ENCODE measurements at regions of chr17 and their contacts with region 1.

Region 1: DNA sequence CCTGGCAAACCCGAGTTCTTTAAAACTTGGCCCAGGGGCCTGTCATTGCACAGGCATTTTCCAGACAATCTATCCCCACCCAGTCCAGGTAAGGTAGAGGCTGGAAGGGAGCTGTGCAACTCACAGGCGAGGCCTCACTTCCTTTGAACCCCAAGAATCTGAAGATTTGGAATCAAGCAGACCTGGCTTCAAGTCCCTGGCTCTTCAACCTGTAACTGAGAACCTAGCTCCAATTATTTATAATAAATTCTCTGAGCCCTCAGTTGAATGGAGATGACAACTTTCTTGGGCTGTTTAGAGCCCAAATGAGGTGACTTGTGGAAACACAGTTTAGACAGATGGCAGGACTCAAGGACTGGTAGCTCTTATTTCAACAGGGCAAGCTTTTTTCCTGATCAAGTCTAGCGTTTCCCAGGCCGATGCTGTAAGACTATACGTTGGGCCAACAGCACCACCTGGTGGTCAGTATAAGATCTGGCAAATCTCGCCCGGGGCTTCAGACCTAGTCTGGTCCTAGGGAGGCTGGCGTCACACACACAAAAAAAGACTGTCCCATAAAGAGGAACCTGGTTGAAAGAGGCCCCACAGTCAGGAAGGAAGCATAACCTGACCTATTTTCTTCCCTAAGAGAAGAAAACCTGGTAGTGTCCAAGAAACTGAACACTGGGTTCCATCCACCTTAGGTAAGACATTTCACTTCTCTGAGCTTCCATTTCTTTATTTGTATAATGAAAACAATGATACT is 117.9 kb downstream of the C17orf67 start:
- DNase-seq: peak; percentile 79
- H3K4me3 Mint-ChIP-seq: no peak overlapping the region
- H3K27ac Mint-ChIP-seq: no peak overlapping the region
- H3K4me1 Mint-ChIP-seq: peaks cover 20% of the 10 kb centered on the region
- H3K27me3 Mint-ChIP-seq: peaks cover 14% of the 10 kb centered on the region

Region 2: DNA sequence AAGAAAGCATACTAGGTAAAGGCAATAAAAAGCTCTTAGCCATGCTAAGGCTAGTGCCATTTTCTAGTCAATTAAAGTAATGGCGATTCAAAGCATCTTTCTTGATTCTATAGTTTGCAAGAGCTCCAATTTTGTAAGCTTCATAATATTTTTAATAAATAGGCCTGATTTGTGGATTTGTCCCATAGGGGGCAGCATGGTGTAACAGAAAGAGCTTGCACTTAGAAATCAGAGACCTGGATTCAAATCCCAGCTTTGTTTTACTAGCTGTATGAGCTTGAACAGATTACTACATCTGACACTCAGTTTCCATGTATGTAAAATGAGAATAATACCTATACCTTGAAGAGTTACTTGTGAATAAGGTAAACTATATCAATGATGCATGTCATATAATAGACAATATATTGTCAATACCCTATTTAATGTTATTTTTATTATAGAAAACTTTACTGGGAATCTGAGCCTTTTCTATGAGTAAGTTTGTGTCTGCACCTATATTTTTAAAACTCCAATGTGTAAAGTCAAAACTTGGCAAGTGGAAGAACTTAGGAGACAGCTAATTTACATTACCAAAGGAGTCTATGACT is 215.9 kb before region 1 on chr17:
- CTCF ChIA-PET with region 1: interaction called, 21 read pairs
- POLR2A ChIA-PET with region 1: no interaction called
- DNase-seq: peak; percentile 19
- H3K4me3 Mint-ChIP-seq: no peak overlapping the region
- H3K27ac Mint-ChIP-seq: no peak overlapping the region
- H3K4me1 Mint-ChIP-seq: no peaks in the 10 kb centered on the region
- H3K27me3 Mint-ChIP-seq: peaks cover 17% of the 10 kb centered on the region

Region 3: DNA sequence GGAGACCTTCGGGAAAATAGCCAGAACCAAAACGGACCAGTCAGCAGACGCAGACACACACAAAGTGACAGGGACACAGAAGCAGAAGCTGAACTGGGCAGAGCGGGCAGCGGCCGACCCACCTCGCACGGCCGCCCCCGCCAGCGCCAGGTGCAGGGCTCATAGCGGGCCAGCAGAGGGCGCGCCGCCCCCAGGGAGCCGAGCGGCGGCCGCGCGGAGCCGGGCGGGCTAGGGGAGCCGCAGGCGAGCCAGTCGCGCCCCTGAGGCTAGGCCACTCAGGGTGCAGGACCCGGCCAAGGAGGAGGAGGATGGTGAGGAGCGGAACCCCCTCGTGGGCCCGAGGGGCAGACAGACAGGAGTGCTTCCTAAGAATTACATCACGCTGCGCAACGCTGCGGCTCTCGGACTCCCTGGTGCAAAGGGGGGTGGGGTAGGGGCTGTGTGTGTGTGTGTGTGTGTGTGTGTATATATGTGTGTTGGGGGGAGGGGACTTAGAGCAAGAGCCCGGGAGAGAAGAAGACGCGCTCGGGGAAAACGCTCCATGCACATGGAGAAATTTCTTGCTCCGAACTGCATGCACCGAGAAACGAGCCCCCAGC is 123.2 kb before region 1 on chr17:
- CTCF ChIA-PET with region 1: interaction called, 83 read pairs
- POLR2A ChIA-PET with region 1: interaction called, 3 read pairs
- DNase-seq: peak; percentile 59
- H3K4me3 Mint-ChIP-seq: peak overlapping the region; percentile 46
- H3K27ac Mint-ChIP-seq: no peak overlapping the region
- H3K4me1 Mint-ChIP-seq: peaks cover 30% of the 10 kb centered on the region
- H3K27me3 Mint-ChIP-seq: peaks cover 64% of the 10 kb centered on the region

Region 4: DNA sequence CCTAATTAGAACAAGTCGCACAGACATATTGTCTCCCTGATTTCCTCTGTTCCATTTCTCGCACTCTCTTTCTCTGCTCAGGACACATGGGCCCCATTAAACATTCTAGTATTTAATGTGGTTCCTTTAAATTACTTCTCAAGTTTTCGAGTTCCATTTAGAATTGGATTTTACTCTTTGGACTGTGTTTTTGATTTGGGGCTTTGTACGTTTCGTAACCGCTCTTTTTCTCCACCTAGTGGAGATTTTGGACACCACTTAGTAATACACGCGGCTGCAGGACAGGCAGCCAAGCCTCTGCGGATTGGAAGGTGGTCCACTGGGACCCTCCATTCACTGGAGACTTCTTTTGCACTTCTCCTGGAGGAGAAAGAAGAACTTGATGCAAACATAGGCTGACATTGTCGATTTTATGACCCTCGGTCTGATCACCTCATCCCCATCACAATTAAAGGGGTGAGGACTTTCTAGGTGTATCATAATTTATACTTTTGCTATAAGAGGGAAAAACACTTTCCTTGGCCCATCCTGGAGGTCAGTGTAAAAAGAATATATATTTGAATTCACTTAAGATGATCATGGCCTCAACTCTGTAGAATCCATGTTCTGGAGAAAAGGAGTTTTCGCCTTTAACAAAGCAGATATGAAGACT is 36.5 kb before region 1 on chr17:
- CTCF ChIA-PET with region 1: interaction called, 20 read pairs
- POLR2A ChIA-PET with region 1: interaction called, 3 read pairs
- DNase-seq: no peak
- H3K4me3 Mint-ChIP-seq: no peak overlapping the region
- H3K27ac Mint-ChIP-seq: no peak overlapping the region
- H3K4me1 Mint-ChIP-seq: peaks cover 7% of the 10 kb centered on the region
- H3K27me3 Mint-ChIP-seq: peaks cover 26% of the 10 kb centered on the region

Region 5: DNA sequence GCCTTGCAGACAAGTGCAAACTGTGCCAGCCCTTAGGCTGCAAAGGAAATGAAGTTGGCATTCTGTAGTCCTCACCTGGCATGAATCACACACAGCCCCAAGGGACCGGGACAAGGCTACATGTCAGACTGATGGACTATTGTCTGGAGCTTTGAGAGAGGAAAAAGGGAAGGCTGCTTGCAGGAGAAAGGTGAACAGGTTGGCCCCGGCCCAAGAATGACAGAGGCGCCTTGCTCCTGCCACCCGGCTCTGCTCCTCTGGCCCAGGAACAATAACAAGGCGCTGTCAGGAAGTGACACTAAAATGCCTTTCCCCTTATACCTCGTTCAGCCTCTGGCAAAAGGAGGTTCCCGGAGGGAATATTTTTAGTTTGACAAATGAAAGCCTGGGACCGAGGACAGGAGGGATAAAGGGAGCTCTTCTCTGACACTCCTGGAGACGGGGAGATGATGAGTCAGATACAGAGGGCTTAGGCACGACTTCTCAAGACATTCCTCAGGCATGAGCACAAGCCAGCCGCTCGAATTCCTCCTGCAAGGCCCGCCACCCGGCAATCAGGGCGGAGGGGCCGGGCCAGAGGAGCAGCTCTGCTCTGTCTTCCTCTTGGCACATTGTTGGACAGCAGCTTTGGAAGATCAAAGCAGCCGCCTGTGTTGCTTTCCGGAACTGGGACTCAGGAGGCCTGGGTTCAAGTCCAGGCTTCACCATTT is 16.4 kb before region 1 on chr17:
- CTCF ChIA-PET with region 1: interaction called, 14 read pairs
- POLR2A ChIA-PET with region 1: no interaction called
- DNase-seq: no peak
- H3K4me3 Mint-ChIP-seq: no peak overlapping the region
- H3K27ac Mint-ChIP-seq: no peak overlapping the region
- H3K4me1 Mint-ChIP-seq: no peaks in the 10 kb centered on the region
- H3K27me3 Mint-ChIP-seq: peaks cover 20% of the 10 kb centered on the region

Region 6: GRCh38 chr17:56779898-56780733 is 64.3 kb after region 1 on chr17:
- CTCF ChIA-PET with region 1: interaction called, 30 read pairs
- POLR2A ChIA-PET with region 1: interaction called, 6 read pairs
- DNase-seq: peak; percentile 91
- H3K4me3 Mint-ChIP-seq: peak overlapping the region; percentile 81
- H3K27ac Mint-ChIP-seq: peak overlapping the region; percentile 90
- H3K4me1 Mint-ChIP-seq: peaks cover 37% of the 10 kb centered on the region
- H3K27me3 Mint-ChIP-seq: peaks cover 11% of the 10 kb centered on the region

Region 7: DNA sequence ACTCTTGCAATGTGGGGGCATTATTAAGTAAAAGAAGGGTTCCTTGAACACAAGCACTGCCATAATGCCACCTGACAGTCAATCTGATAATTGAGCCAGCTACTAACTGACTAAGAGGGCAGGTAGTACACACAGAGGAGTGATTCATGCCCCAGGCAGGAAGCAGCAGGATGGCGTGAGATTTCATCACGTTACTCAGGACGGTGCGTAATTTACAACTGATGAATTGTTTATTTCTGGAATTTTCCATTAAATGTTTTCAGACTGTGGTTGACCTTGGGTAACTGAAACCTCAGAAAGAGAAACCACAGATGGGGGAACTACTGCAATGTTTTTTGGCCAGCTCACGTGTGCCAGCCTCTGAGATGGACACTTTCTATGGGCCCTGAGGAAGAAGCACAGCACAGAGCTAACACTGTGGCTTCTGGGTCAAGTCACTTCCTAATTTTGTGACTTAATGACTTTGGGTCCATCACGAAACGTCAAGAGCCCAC is 71.3 kb after region 1 on chr17:
- CTCF ChIA-PET with region 1: interaction called, 12 read pairs
- POLR2A ChIA-PET with region 1: interaction called, 3 read pairs
- DNase-seq: peak; percentile 75
- H3K4me3 Mint-ChIP-seq: peak overlapping the region; percentile 22
- H3K27ac Mint-ChIP-seq: peak overlapping the region; percentile 82
- H3K4me1 Mint-ChIP-seq: peaks cover 35% of the 10 kb centered on the region
- H3K27me3 Mint-ChIP-seq: peaks cover under 1% of the 10 kb centered on the region

Measured in activated CD4-positive, alpha-beta memory T cell treated with anti-CD3 and anti-CD28 coated beads, Interleukin-2, amount 10 ng/mL, durations not matched to agents 7 days and 5 days (primary cell).